ENCODE measurements at regions of chr2 and their contacts with region 1.

Region 1: DNA sequence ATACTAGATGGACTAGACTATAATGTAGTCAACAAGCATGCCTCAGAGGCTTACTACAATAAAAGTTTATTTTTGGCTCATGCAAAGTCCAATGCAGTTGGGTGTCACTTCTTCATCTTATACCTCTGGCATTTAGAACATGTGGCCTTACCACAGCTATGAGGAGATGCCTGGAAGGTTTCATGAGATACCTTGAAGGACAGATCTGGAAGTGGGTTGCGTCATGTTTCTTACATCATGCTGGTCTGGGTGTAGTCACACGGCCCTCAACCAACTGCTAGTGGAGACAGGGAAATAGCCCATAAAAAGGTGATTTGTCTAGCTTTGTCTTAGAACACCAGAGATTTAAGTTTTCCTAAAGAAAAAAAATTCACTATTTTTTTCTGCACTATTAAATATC is 91.7 kb upstream of the MMADHC start:
- DNase-seq: no peak
- ATAC-seq: no peak
- H3K4me3 ChIP-seq: no peak overlapping the region
- H3K27ac ChIP-seq: no peak overlapping the region
- H3K4me1 ChIP-seq: no peaks in the 10 kb centered on the region
- H3K27me3 ChIP-seq: no peaks in the 10 kb centered on the region
- CTCF ChIP-seq: no peak

Region 2: DNA sequence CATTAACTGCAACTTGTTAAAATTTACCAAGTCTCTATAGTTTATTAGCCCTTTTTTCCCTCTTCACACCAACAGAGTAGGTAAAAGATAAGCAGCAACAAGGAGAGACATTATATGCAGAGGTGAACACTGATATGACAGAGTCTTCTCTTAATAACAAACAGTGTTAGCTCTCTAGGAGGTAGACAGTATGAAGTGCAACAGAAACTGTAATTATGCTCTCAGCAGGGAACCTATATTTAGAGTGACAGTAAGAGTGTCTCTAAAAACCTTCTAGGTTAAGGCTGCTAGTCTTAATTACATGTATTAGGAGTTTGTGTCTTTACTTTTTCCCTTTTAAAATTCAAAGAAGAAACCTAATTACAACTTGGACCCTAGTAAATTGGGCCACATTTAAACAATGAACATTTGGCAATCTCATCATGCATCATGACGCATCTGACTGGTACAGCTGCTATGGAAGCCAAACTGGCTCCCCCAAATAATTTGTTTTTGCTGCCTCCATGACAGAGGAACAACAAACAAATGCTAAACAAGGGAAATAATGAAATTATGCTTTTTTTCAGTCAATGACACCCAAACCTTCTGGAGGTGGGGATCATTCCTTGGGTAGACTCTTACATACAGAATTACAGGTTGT is 21.8 kb before region 1 on chr2:
- intact Hi-C with region 1: loop called in 1 of 10 experiments (anchors 2 kb)
- DNase-seq: no peak
- ATAC-seq: no peak
- H3K4me3 ChIP-seq: no peak overlapping the region
- H3K27ac ChIP-seq: no peak overlapping the region
- H3K4me1 ChIP-seq: peaks cover 0 to 9% (median 0%) of the 10 kb centered on the region in 9 donors
- H3K27me3 ChIP-seq: no peaks in the 10 kb centered on the region
- CTCF ChIP-seq: no peak